Aorta (tissue), 5 donors: ENCODE measurements at regions of chr15 and their contacts with region 1.

Region 1: GRCh38 chr15:68335251-68335650 is 57.7 kb downstream of the FEM1B start:
- DNase-seq: peak; percentile 83 to 89
- ATAC-seq: peak; percentile 61
- H3K4me3 ChIP-seq: no peak overlapping the region
- H3K27ac ChIP-seq: peak overlapping the region; percentile 15 to 93
- H3K4me1 ChIP-seq: peaks cover 2 to 5% of the 10 kb centered on the region in 2 donors
- H3K27me3 ChIP-seq: no peaks in the 10 kb centered on the region

Region 2: DNA sequence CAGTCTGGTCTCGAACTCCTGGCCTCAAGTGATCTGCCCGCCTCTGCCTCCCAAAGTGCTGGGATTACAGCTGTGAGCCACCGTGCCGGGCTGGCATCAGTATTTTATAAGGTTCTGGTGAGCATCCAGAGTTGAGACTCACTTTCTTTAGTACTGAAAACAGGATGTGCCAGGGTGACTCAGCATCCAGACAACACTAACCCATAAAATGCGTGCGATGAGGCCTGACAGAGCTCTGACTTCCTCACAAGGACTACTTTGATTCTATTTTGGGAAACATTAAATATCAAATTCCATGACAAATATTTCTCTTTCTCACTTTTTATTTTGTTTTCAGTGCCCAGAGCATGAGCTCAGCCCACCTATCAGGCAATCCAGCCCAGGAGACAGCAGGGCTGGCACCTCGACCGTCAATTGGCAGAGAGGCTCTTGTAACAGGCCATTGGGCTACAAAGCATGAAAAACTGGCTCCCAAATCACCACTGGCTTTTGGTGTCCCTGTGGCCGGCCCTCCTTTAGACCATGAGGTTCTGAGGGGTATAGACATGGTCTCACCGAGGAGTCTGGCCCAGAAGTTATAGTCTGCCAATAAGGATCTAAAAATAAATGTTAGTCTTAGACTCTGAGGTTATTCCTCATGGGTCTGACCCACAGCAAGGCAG is 17.3 kb after region 1 on chr15:
- intact Hi-C with region 1: loop called in 1 of 2 experiments (anchors 2 kb)
- DNase-seq: peak; percentile 89 to 91
- ATAC-seq: peak; percentile 83
- H3K4me3 ChIP-seq: no peak overlapping the region
- H3K27ac ChIP-seq: peak overlapping the region; percentile 95 to 99
- H3K4me1 ChIP-seq: peaks cover 2 to 6% of the 10 kb centered on the region in 2 donors
- H3K27me3 ChIP-seq: no peaks in the 10 kb centered on the region